ENCODE measurements at regions of chr2 and their contacts with region 1.

Region 1: DNA sequence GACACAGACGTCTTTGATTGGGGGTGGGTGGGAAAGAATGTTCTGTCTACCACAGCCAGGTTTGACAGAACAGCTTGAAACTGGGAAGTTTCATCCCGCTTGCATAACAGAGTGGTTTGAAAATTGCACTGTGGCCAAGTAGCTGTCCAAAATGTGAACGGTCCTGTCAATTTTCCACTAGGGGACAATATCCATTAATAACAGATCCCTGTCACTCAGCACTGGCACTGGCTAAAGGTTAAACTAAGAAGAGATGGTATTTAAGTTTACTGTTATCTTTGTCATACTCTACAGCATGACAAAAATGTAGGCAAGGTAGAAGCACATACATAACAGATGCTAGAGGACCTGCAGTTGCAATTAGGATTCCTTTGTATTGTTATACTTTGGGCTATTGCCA is 55.6 kb upstream of the ACMSD start:
- DNase-seq: no peak
- ATAC-seq: no peak

Region 2: DNA sequence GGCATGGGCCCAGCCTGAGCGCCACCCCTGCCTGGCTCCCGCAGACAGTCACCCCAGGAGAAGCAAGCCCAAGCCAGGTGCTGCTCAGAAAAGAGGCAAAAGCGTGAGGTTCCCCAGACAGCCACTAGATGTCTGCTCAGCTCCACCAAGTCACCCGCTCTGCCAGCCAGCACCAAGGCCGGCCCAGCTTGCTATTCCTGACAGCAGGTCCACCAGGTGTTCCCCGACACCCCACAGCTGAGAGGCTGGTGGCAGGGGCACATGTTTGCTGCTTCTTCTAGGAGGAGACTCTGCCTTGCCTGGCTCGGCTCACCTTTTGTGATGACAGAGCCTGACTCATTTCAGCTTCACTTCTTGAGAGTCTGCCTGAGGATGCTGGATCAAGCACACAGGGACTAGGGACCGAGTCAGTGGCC is 322.2 kb before region 1 on chr2:
- intact Hi-C with region 1: loop called (anchors 5 kb)
- DNase-seq: peak; percentile 75
- ATAC-seq: peak; percentile 67

Region 3: DNA sequence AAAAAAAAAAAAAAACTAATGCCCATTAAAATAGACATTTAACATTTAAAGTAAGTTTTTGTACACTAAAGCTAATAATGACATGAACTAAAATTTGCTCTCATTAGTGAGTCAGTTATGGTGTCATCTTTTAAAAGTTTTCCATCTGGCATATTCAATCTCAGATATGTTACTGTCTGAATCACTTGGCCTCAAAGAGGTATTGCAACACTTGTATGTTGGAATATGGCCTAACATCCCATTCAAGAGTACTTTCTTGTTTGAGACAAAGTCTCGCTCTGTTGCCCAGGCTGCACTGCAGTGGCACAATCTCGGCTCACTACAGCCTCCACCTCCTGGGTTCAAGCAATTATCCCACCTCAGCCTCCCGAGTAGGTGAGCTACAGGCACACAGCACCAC is 233.7 kb before region 1 on chr2:
- intact Hi-C with region 1: loop called (anchors 10 kb)
- DNase-seq: no peak
- ATAC-seq: peak; percentile 57

Region 4: GRCh38 chr2:134739879-134740301 is 42.9 kb before region 1 on chr2:
- intact Hi-C with region 1: no loop called
- DNase-seq: no peak
- ATAC-seq: peak; percentile 50

Region 5: DNA sequence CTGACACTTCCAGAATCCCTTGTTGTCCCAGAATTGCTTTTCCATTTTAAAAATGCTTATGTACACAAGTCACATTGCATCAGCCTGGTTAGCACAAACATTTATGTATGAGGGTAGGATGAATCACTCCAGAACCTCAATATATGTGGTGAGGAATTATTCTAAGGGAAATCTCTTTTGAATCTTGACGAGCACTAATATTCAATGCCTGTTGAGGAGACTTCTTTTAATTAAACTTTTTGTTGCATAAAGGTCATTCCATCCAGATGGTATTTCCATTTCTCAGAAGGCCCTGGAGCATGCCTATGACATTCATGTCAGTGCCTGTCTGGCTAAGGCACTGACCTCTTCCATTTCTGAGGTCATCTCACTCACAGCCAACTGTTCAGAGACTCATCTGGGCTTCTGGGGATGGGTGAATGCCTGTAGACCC is 83.8 kb after region 1 on chr2:
- intact Hi-C with region 1: no loop called
- DNase-seq: no peak
- ATAC-seq: no peak

Region 6: GRCh38 chr2:134897932-134898331 is 115.1 kb after region 1 on chr2:
- intact Hi-C with region 1: loop called (anchors 10 kb)
- DNase-seq: no peak
- ATAC-seq: no peak

Region 7: GRCh38 chr2:134952608-134953007 is 169.8 kb after region 1 on chr2:
- intact Hi-C with region 1: no loop called
- DNase-seq: no peak
- ATAC-seq: no peak

Measured in Right ventricle myocardium inferior (tissue), 1 donor.